Breast epithelium (tissue), 4 donors: ENCODE measurements at regions of chr3 and their contacts with region 1.

Region 1: GRCh38 chr3:128497387-128498126 is 4.6 kb upstream of the GATA2 start:
- DNase-seq: no peak
- H3K4me3 ChIP-seq: peak overlapping the region; percentile 33 to 73 (median 55)
- H3K27ac ChIP-seq: no peak overlapping the region
- H3K4me1 ChIP-seq: peaks cover 3 to 8% of the 10 kb centered on the region in 2 donors
- H3K27me3 ChIP-seq: peaks cover 2 to 80% of the 10 kb centered on the region in 2 donors
- CTCF ChIP-seq: peak in 2 of 3 donors; percentile 39 to 48
- POLR2A ChIP-seq: no peak

Region 2: GRCh38 chr3:128226795-128227395 is 270.7 kb before region 1 on chr3:
- intact Hi-C with region 1: no loop called
- DNase-seq: no peak
- H3K4me3 ChIP-seq: no peak overlapping the region
- H3K27ac ChIP-seq: no peak overlapping the region
- H3K4me1 ChIP-seq: no peaks in the 10 kb centered on the region
- H3K27me3 ChIP-seq: no peaks in the 10 kb centered on the region
- CTCF ChIP-seq: peak in 2 of 3 donors; percentile 27 to 34
- POLR2A ChIP-seq: no peak

Region 3: DNA sequence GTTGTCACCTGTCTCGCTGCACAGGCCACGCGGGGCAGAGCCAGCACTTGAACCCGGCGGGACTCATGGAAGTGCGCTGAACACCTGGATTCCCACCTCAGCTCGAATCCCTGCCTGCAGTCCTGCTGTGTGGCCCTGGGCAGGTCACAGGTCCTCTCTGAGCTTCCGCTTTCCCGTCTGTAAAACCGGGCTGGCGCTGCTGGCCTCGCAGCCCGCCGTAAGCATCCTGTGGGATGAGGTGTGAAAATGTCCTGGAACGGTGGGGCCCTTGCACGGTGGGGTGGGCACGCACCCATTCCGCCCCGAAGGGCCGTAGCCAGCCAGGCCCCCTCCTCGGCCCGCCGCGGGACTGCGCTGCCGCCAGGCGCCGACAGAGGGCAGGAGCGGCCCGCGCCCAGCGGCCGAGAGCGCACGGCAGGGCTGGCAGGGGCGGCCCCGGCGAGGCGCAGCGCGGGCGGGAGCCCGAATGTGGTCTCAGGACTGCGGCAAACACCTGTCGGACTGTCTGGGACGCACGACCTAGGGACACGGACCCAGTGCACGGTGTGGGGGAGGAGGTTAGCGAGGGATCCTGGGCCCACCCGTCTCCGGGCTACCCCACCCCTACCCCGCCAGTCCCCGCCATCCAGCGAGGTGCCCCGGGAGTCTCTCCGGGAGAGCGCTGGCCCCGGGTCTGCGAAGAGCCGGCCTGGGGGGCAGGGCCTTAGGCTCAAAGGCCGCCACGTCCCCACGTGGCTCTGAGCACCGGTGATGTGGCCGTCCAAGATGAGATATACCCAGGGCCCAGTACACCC is 71.2 kb before region 1 on chr3:
- intact Hi-C with region 1: loop called (anchors 10 kb)
- DNase-seq: no peak
- H3K4me3 ChIP-seq: peak overlapping the region in 2 of 3 donors; percentile 21 to 63
- H3K27ac ChIP-seq: no peak overlapping the region
- H3K4me1 ChIP-seq: no peaks in the 10 kb centered on the region
- H3K27me3 ChIP-seq: no peaks in the 10 kb centered on the region
- CTCF ChIP-seq: peak; percentile 51 to 97 (median 54)
- POLR2A ChIP-seq: no peak

Region 4: GRCh38 chr3:128464188-128464587 is 33.4 kb before region 1 on chr3:
- intact Hi-C with region 1: no loop called
- DNase-seq: no peak
- H3K4me3 ChIP-seq: no peak overlapping the region
- H3K27ac ChIP-seq: no peak overlapping the region
- H3K4me1 ChIP-seq: no peaks in the 10 kb centered on the region
- H3K27me3 ChIP-seq: no peaks in the 10 kb centered on the region
- CTCF ChIP-seq: no peak
- POLR2A ChIP-seq: no peak

Region 5: DNA sequence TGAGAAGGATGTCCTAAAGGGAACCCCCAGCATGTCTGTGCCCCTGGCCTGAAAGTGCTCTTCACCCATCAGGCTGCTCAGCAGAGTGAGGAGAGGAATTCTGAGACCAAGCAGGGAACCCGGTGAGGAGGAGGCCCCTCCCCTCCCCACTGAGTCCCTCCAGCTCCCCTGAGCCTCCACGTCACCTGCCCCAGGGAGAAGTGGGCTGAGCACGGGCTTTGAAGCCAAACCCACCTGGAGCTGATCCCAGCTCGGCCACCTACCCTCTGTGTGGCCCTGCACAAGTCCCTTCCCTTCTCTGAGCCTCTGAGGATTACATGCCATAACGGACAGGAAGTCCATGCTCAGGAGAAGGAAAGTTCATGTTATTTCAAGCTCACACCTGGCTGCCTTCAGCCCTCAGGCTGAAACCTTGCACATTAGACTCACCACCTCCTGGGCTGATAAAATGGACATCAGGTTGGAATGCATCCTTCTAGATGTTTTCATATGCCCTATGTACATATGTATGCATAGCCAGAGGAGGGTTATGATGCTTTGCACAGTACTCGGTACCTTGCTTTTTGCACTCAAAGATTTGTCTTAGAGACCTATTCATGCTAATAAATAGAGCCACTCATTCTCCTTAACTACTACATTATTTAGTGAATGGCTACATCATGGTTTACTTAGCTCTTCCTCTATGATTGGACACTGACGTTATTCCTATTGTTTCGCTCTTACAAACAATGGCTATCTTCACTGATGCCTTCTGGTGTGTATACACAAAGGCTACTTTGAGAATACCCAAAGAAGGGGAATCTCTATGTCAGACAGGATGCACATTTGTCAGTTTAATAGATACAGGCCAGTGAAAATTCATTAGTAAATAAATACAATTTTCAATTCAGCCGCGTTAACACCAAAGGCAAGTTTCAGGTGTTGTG is 27.1 kb after region 1 on chr3:
- intact Hi-C with region 1: no loop called
- DNase-seq: no peak
- H3K4me3 ChIP-seq: no peak overlapping the region
- H3K27ac ChIP-seq: no peak overlapping the region
- H3K4me1 ChIP-seq: no peaks in the 10 kb centered on the region
- H3K27me3 ChIP-seq: peaks cover 0 to 26% of the 10 kb centered on the region in 2 donors
- CTCF ChIP-seq: no peak
- POLR2A ChIP-seq: no peak

Region 6: GRCh38 chr3:128559486-128560225 is 62.1 kb after region 1 on chr3:
- intact Hi-C with region 1: no loop called
- DNase-seq: no peak
- H3K4me3 ChIP-seq: no peak overlapping the region
- H3K27ac ChIP-seq: no peak overlapping the region
- H3K4me1 ChIP-seq: no peaks in the 10 kb centered on the region
- H3K27me3 ChIP-seq: peaks cover 0 to 16% of the 10 kb centered on the region in 2 donors
- CTCF ChIP-seq: no peak
- POLR2A ChIP-seq: no peak